GM12878 (cell line): ENCODE measurements at regions of chr7 and their contacts with region 1.

Region 1: GRCh38 chr7:149125863-149126661 is at the start of gene ZNF425:
- DNase-seq: peak; percentile 66
- ATAC-seq: peak; percentile 92
- H3K4me3 ChIP-seq: peak within 1 kb of the TSS; percentile 96
- H3K27ac ChIP-seq: peak within 1 kb of the TSS; percentile 90
- H3K4me1 ChIP-seq: no peaks in the 10 kb centered on the region
- H3K27me3 ChIP-seq: no peaks in the 10 kb centered on the region
- CTCF ChIP-seq: peak; percentile 87 to 96 (median 92)
- EP300 ChIP-seq: no peak
- POLR2A ChIP-seq: peak; percentile 99
- RAD21 ChIP-seq: peak; percentile 32; the same call in 1 of the 2 replicates
- polyA plus RNA-seq, gene ZNF425: 0.19 to 0.20 TPM

Region 2: GRCh38 chr7:149180722-149181449 is 54.8 kb after region 1 on chr7:
- CTCF ChIA-PET with region 1: no interaction called
- POLR2A ChIA-PET with region 1: no interaction called
- RAD21 ChIA-PET with region 1: no interaction called
- SMC1A ChIA-PET with region 1: no interaction called
- in situ Hi-C with region 1: no loop called
- intact Hi-C with region 1: no loop called
- DNase-seq: no peak
- ATAC-seq: no peak
- H3K4me3 ChIP-seq: no peak overlapping the region
- H3K27ac ChIP-seq: no peak overlapping the region
- H3K4me1 ChIP-seq: no peaks in the 10 kb centered on the region
- H3K27me3 ChIP-seq: no peaks in the 10 kb centered on the region
- CTCF ChIP-seq: no peak
- EP300 ChIP-seq: no peak
- POLR2A ChIP-seq: no peak
- RAD21 ChIP-seq: no peak

Region 3: GRCh38 chr7:149239345-149240191 is 113.5 kb after region 1 on chr7 and contains the start of gene ZNF212:
- CTCF ChIA-PET with region 1: no interaction called
- POLR2A ChIA-PET with region 1: no interaction called
- RAD21 ChIA-PET with region 1: no interaction called
- SMC1A ChIA-PET with region 1: no interaction called
- in situ Hi-C with region 1: no loop called
- intact Hi-C with region 1: loop called (anchors 5 kb)
- DNase-seq: peak; percentile 56
- ATAC-seq: peak; percentile 99
- H3K4me3 ChIP-seq: peak within 1 kb of the TSS; percentile 99
- H3K27ac ChIP-seq: peak within 1 kb of the TSS; percentile 73
- H3K4me1 ChIP-seq: peaks cover 10% of the 10 kb centered on the region
- H3K27me3 ChIP-seq: no peaks in the 10 kb centered on the region
- CTCF ChIP-seq: peak; percentile 87 to 96 (median 92); a peak in 5 of 6 replicates
- EP300 ChIP-seq: no peak
- POLR2A ChIP-seq: peak; percentile 84
- RAD21 ChIP-seq: peak; percentile 51
- polyA plus RNA-seq, gene ZNF212: 1.2 to 2.1 TPM